Right cardiac atrium (tissue), 5 donors: ENCODE measurements at regions of chr5 and their contacts with region 1.

Region 1: DNA sequence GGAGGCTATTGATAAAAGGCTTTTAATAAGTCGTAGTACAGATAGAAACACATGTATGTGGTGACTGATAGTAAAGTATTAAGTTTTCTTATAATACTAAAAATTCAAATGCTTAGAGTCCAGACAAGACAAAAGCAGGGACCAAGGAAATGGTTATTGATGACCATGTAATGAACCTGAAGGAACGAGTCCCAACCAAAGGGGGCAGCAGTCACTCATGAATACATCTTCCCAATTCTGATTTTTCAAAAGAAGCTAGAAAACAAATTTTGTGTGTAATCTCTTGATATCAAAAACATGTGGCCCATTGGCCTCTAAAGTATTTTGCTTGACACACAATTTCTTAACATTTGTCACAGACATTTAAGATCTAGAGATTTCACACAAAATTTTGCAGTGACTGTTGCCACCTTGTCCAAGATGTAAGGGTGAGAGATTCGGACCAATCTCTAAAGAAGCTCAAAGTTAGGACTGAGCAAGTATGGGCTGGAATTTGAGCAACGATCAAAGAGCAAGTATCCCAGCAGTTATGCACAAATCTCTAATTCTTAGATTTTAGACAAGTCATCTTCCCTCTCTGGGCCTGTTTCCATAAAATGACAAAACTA is 66.8 kb downstream of the ARL15 start:
- DNase-seq: no peak
- ATAC-seq: no peak
- H3K4me3 ChIP-seq: no peak overlapping the region
- H3K27ac ChIP-seq: no peak overlapping the region
- H3K4me1 ChIP-seq: peaks cover 5% of the 10 kb centered on the region
- H3K27me3 ChIP-seq: no peaks in the 10 kb centered on the region

Region 2: DNA sequence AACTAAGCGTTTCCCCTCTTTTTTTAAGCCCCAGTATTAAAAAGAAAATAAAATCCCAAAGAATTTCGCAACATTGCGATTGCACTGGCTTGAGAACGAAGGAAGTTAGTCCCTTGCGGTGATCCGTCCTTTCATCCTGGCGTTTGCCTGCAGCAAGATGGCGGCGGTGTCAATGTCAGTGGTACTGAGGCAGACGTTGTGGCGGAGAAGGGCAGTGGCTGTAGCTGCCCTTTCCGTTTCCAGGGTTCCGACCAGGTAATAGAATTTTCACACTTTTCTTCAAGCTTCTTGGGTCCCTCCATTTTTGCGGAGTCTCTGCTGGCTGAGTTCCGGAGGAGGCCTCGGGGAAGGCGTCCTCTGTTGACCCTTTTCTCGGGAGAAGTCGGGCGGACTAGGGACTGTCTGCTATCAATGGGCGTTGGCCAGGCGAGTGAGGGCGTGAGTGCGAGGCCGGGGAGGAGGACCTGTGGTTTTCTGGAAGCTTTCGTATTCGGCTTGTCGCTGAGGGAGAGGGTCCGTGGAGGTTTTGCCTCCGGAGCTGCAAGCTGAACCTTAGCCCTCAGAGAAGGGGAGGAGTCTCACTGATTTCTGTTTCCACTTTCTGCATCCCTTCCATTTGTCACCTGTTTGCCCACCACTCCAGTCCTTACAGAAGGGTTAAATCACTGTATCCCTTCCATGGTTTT is 682.9 kb before region 1 on chr5 and contains the start of gene NDUFS4:
- intact Hi-C with region 1: no loop called
- DNase-seq: peak; percentile 87 to 93 (median 91)
- ATAC-seq: peak; percentile 94 to 98
- H3K4me3 ChIP-seq: peak within 1 kb of the TSS; percentile 88
- H3K27ac ChIP-seq: peak within 1 kb of the TSS; percentile 92
- H3K4me1 ChIP-seq: no peaks in the 10 kb centered on the region
- H3K27me3 ChIP-seq: no peaks in the 10 kb centered on the region
- total RNA-seq, gene NDUFS4: 101 to 124 (median 114) TPM

Region 3: DNA sequence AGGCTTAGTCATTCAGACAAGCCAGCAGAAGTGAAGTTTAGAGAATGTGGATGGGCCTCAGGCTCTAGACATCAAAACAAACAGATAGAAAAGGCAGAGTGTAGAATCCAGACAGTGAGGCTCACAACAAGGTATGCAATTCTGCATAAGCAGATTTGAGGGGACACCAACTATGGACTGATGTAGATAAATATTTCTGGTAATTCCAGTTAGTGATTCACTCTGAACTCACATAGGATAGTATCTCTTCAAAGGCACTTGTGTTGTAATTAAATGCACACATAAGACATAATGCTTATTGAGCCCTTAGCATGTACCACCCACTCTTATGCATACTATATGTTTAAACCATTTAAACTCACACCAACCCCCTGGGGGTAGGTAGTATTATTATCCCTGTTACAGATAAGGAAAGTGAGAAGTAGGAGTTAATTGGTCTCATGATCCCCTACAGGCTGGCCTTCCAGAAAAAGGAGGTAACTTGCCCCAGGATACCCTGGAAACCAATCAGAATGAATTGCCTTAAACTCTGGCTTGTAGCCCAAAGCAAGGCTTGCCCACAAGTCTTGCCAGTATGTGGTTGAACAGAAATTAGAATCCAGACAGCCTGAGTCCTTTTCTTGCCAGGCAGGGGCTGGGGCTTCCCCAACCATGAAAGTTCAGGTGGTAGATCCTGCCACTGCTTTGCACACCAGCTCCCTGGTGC is 172.5 kb after region 1 on chr5:
- intact Hi-C with region 1: loop called in 1 of 4 experiments (anchors 5 kb)
- DNase-seq: no peak
- ATAC-seq: no peak
- H3K4me3 ChIP-seq: no peak overlapping the region
- H3K27ac ChIP-seq: no peak overlapping the region
- H3K4me1 ChIP-seq: no peaks in the 10 kb centered on the region
- H3K27me3 ChIP-seq: no peaks in the 10 kb centered on the region